ENCODE measurements at regions of chr21 and their contacts with region 1.

Region 1: DNA sequence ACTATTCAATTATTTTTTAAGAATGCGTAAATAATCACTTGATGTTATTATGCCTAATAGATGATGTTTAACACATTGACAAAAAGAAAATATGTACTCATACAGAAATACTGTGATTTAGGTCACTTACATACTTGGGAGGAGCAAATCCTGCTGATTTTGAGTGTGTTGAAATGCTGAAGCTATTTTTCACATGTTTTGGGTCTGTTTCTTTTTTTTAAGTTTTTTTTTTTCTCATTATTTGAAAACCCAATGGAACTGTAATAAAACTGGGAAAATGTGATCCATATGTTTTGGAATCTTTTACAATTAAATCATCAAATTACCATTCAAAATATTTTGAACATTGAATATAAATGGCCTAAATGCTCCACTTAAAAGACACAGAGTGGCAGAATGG is 366.2 kb upstream of the ADAMTS5 start:
- DNase-seq: no peak
- H3K4me3 ChIP-seq: no peak overlapping the region
- H3K27ac ChIP-seq: no peak overlapping the region
- H3K4me1 ChIP-seq: no peaks in the 10 kb centered on the region
- H3K27me3 ChIP-seq: no peaks in the 10 kb centered on the region
- CTCF ChIP-seq: no peak

Region 2: DNA sequence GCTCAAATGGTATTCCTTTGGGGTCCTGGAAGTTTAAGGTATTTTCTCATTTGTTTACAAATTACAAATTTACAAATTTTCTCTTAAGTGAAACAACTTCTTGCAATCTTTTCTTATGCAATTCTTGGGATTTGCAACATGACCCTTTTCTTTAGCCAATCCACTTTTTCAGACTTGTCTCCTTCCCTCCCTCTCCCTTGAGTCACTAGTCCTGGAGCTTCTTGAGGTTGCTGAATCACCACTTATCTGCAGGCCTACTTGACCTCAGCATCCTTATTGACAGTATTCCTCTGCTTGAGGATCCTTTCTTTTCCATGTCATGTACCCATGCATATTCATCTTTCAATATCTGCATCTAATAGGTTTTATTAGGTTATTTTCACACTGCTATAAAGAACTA is 63.5 kb before region 1 on chr21:
- dilution Hi-C with region 1: loop called (anchors 5 kb)
- DNase-seq: peak; percentile 54
- H3K4me3 ChIP-seq: no peak overlapping the region
- H3K27ac ChIP-seq: peak overlapping the region; percentile 15
- H3K4me1 ChIP-seq: peaks cover 6% of the 10 kb centered on the region
- H3K27me3 ChIP-seq: no peaks in the 10 kb centered on the region
- CTCF ChIP-seq: no peak

Measured in keratinocyte (primary cell).